AG04449 (cell line): ENCODE measurements at regions of chr7 and their contacts with region 1.

Region 1: GRCh38 chr7:1922071-1922869 is 252.2 kb downstream of the ELFN1 start:
- DNase-seq: no peak
- H3K4me3 ChIP-seq: peak overlapping the region; percentile 36
- CTCF ChIP-seq: no peak

Region 2: GRCh38 chr7:1906087-1906830 is 16.0 kb before region 1 on chr7:
- CTCF ChIA-PET with region 1: interaction called, 22 read pairs
- POLR2A ChIA-PET with region 1: no interaction called
- DNase-seq: no peak
- H3K4me3 ChIP-seq: no peak overlapping the region
- CTCF ChIP-seq: no peak

Region 3: GRCh38 chr7:2157468-2158279 is 235.4 kb after region 1 on chr7:
- CTCF ChIA-PET with region 1: no interaction called
- POLR2A ChIA-PET with region 1: no interaction called
- DNase-seq: peak; percentile 71
- H3K4me3 ChIP-seq: no peak overlapping the region; the same call in 1 of the 2 replicates
- CTCF ChIP-seq: no peak